ENCODE measurements at regions of chr15 and their contacts with region 1.

Region 1: DNA sequence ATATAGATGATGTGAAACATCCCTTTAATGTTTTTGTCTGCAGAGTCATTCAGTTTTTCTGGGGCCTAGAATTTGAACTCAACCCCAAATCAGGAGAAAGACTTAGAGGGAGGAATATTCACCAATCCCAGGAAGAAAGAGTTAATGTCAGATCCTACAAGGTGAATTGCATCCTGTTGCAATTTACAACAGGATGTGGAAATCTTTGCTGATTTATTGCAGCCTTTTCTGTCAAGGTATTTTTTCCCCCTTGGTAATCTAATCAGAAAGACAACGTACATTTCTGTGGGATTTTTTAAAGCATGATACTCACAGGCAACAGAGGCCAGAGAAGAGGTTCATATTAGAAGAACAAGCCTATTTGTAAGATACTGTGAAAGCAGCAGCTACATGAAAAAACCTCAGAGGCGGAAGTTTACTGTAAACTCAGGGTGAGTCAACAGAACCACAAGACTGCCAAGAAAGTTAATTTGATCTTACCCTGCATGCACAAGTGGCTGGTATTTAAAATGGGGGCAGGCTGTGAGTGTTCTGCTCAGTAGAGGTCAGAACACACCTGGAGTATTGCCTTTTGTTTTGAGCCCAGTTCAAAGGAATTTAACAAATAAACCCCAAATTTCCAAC is 531.9 kb downstream of the AGBL1 start:
- DNase-seq: peak; percentile 81
- H3K4me3 ChIP-seq: no peak overlapping the region
- H3K27ac ChIP-seq: peak overlapping the region; percentile 29
- H3K4me1 ChIP-seq: peaks cover 19% of the 10 kb centered on the region
- H3K27me3 ChIP-seq: no peaks in the 10 kb centered on the region
- CTCF ChIP-seq: no peak

Region 2: DNA sequence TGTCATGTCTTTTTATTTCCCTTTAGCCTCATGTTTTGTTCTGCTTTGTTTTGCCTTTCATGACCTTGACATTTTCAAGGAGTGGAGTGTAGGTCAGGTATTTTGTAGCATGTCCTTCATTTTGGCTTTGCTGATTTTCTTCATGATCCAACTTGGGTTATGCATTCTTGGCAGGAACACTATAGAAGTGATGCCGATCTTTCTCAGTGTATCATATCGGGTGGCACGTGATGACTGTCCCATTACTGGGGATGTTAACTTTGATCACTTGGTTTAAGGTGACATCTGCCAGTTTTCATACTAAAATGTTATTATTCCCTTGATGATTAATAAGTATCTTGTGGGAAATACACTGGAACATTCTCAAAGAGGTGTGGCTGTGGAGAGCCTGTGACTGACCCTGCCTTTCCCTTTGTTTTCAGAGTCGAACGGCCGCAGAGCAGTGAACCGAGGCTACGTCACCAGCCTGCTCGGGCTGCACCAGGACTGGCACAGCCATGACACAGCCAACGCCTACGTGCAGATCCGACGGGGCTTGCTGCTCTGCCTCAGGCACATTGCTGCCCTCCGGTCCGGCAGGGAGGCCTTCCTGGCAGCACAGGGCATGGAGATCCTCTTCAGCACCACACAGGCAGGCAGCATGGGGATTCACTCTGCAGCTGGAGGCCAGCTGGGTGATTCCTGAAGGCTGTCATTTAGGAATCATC is 364.1 kb before region 1 on chr15:
- CTCF ChIA-PET with region 1: no interaction called
- dilution Hi-C with region 1: no loop called
- in situ Hi-C with region 1: loop called in 1 of 2 experiments (anchors 10 kb)
- intact Hi-C with region 1: no loop called
- DNase-seq: peak; percentile 92
- H3K4me3 ChIP-seq: no peak overlapping the region
- H3K27ac ChIP-seq: peak overlapping the region; percentile 55
- H3K4me1 ChIP-seq: peaks cover 14% of the 10 kb centered on the region
- H3K27me3 ChIP-seq: no peaks in the 10 kb centered on the region
- CTCF ChIP-seq: no peak

Measured in mammary epithelial cell (primary cell).